GM13976 (cell line): ENCODE measurements at regions of chr15 and their contacts with region 1.

Region 1: GRCh38 chr15:25438601-25439368 is at the start of gene UBE3A:
- DNase-seq: peak; percentile 94
- CTCF ChIP-seq: peak; percentile 18

Region 2: GRCh38 chr15:24956111-24956838 is 482.5 kb before region 1 on chr15:
- in situ Hi-C with region 1: loop called (anchors 25 kb)
- DNase-seq: peak; percentile 73
- CTCF ChIP-seq: no peak